MCF 10A (cell line): ENCODE measurements at regions of chr11 and their contacts with region 1.

Region 1: DNA sequence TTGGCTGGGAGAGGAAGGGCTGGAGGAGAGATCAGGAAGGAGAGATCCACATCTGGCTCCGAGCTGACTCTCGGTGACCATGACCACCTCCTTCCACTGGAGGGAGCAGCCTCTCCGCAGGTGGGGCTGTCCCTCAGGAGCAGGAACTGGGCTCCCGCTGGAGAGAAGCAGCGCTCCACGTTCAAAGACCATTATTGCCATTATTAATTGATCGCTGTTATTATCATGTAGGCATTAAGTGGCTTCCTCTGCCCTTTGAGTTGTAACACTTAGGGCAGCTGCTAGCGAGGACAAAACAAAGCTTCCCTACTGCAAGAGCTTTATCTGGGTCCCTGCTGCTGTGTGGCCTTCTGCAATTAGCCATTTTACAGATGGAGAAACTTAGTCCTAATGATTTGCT is 251.9 kb downstream of the ST3GAL4 start:
- DNase-seq: peak; percentile 65
- H3K4me3 Mint-ChIP-seq: peak overlapping the region; percentile 5
- H3K27ac Mint-ChIP-seq: no peak overlapping the region
- H3K4me1 Mint-ChIP-seq: peaks cover 5% of the 10 kb centered on the region
- H3K27me3 Mint-ChIP-seq: peaks cover 37% of the 10 kb centered on the region
- CTCF ChIP-seq: peak; percentile 93

Region 2: GRCh38 chr11:126440792-126441514 is 166.4 kb before region 1 on chr11:
- CTCF ChIA-PET with region 1: interaction called, 3 read pairs
- POLR2A ChIA-PET with region 1: no interaction called
- intact Hi-C with region 1: loop called (anchors 10 kb)
- DNase-seq: peak; percentile 80
- H3K4me3 Mint-ChIP-seq: no peak overlapping the region
- H3K27ac Mint-ChIP-seq: no peak overlapping the region
- H3K4me1 Mint-ChIP-seq: peaks cover 5% of the 10 kb centered on the region
- H3K27me3 Mint-ChIP-seq: no peaks in the 10 kb centered on the region
- CTCF ChIP-seq: peak; percentile 95

Region 3: GRCh38 chr11:126592496-126593410 is 14.6 kb before region 1 on chr11:
- CTCF ChIA-PET with region 1: interaction called, 44 read pairs
- POLR2A ChIA-PET with region 1: no interaction called
- intact Hi-C with region 1: no loop called
- DNase-seq: no peak
- H3K4me3 Mint-ChIP-seq: no peak overlapping the region
- H3K27ac Mint-ChIP-seq: no peak overlapping the region
- H3K4me1 Mint-ChIP-seq: no peaks in the 10 kb centered on the region
- H3K27me3 Mint-ChIP-seq: peaks cover 6% of the 10 kb centered on the region
- CTCF ChIP-seq: no peak

Region 4: DNA sequence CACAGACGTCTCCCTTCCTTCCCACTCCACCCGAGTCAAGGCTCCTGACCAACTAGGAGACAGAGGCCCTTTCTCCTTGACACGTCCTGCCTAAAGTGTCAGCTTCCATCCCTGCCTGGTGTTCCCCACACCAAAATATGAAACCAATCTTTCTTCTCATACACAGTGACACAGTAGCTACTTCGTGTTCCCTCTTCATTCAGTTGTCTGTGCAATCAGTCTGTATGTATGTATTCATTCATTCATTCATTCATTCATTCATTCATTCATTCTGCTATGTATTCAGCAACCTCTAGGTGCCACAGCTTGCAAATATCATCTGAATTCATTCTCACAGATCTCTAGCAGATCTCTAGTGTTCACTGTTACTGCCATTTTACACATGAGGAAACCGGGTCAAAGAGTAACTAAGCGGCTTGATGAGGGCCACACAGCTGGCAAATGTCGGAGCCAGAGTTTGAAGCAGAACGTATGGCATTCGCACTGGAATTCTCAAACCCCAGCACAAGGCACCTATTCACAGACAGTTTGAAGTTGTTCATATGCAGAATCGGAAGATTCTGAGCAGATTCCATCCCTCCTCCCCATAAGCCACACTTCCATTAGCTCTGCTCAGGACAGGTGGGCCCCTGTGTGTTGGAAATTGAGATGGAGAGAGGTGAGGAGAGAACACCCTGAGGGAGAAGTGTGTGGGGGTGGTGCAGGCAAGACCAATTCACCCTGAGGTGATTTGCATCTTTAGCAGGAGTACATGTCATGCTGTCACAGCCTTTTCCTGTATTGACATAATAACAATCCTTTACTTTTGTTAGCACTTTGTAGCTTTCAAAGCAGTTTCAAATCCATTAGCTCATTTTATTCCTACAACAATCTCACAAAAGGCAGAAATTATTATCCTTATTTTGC is 23.8 kb after region 1 on chr11:
- CTCF ChIA-PET with region 1: interaction called, 15 read pairs
- POLR2A ChIA-PET with region 1: no interaction called
- intact Hi-C with region 1: no loop called
- DNase-seq: no peak
- H3K4me3 Mint-ChIP-seq: no peak overlapping the region
- H3K27ac Mint-ChIP-seq: no peak overlapping the region
- H3K4me1 Mint-ChIP-seq: no peaks in the 10 kb centered on the region
- H3K27me3 Mint-ChIP-seq: no peaks in the 10 kb centered on the region
- CTCF ChIP-seq: no peak

Region 5: GRCh38 chr11:126716456-126717083 is 109.2 kb after region 1 on chr11:
- CTCF ChIA-PET with region 1: interaction called, 10 read pairs
- POLR2A ChIA-PET with region 1: no interaction called
- intact Hi-C with region 1: no loop called
- DNase-seq: peak; percentile 54
- H3K4me3 Mint-ChIP-seq: no peak overlapping the region
- H3K27ac Mint-ChIP-seq: no peak overlapping the region
- H3K4me1 Mint-ChIP-seq: no peaks in the 10 kb centered on the region
- H3K27me3 Mint-ChIP-seq: peaks cover 37% of the 10 kb centered on the region
- CTCF ChIP-seq: peak; percentile 18

Region 6: DNA sequence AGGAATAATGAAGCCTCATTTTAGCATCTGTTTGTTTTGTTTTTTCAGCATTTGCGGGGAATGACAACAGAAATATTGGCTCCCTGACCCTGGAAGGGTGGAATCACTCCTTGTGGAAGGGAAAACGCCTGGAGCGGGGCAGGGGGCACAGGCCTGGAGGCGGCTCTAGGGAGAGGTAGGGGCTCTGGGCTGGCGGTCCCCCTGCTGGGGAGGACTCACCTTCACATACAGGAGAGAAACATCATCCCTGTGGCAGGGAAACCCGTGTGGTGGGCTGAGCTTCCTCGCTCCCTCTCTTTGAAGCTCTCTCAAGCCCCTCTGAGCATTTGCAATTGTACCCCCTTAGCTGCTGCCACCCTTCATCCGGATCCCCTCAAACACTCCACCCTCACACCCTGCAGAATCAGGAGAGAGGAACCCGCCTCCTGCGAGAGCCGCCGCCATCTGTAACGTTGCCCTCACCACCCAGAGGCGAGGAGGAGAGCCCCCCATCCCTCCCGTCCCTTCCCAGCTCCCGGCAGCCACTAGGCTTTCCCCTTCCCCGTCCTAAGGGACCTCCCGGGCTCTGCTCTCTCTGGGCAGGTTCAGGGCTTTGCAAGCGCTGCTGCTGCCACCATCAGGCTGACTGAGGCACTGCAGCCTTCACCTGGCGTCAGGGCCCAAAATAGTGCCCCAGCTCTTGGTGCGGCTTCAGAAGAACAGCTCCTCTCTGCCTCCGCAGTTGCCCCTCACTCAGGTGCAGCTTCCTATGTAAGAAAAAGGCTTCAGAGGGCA is 382.8 kb after region 1 on chr11:
- CTCF ChIA-PET with region 1: interaction called, 116 read pairs
- POLR2A ChIA-PET with region 1: interaction called, 4 read pairs
- intact Hi-C with region 1: loop called (anchors 1 kb)
- DNase-seq: peak; percentile 49
- H3K4me3 Mint-ChIP-seq: no peak overlapping the region
- H3K27ac Mint-ChIP-seq: no peak overlapping the region
- H3K4me1 Mint-ChIP-seq: no peaks in the 10 kb centered on the region
- H3K27me3 Mint-ChIP-seq: peaks cover 53% of the 10 kb centered on the region
- CTCF ChIP-seq: peak; percentile 88